ENCODE measurements at regions of chr6 and their contacts with region 1.

Region 1: GRCh38 chr6:41027799-41028628 is 11.0 kb downstream of the UNC5CL start:
- DNase-seq: peak; percentile 86 to 93 (median 93)
- H3K4me3 ChIP-seq: peak overlapping the region; percentile 63 to 88 (median 76)
- H3K27ac ChIP-seq: peak overlapping the region; percentile 51 to 79
- H3K4me1 ChIP-seq: peaks cover 0 to 37% (median 27%) of the 10 kb centered on the region in 4 experiments
- H3K27me3 ChIP-seq: no peaks in the 10 kb centered on the region

Region 2: DNA sequence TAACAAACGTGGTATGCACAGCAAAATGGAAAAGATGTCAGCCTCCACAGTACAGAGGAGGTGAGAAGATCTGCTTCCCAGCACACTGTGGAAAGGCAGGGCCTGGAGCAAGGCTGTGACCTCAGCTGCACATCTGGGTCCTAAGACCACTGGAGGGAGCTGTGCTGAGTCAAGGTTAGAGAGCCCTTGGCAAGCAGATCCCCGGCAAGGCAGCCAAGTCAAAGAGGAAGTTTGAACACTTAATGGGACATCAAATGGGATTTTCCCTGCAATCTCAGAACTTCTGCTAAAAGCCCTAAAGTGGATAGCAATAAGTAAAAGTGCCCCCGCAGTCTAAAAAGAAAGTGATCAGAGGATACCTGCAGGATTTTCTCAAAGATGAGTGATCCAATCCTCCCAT is 28.4 kb before region 1 on chr6:
- CTCF ChIA-PET with region 1: interaction called, 73 read pairs
- POLR2A ChIA-PET with region 1: no interaction called
- DNase-seq: peak; percentile 75 to 87 (median 86)
- H3K4me3 ChIP-seq: no peak overlapping the region
- H3K27ac ChIP-seq: no peak overlapping the region
- H3K4me1 ChIP-seq: no peaks in the 10 kb centered on the region
- H3K27me3 ChIP-seq: peaks cover 0 to 10% (median 0%) of the 10 kb centered on the region in 5 experiments

Region 3: DNA sequence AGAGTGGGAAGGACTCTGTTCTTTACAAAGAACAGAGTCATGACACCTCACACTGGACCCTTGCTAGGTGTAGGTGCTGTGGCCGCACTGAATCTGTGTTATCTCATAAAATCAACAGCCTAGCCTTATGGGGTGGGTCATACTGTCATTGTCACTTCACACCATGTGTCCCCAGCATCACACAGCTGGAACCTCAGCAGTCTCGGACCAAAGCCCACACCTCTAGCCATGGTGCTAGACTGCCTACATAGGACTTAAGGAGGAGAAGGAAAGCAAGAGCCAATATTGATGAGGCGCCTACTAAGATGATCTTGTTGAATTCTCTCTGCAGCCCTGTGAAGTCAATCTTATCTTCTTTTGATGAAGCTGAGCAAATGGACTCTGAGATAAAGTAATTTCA is 20.0 kb before region 1 on chr6:
- CTCF ChIA-PET with region 1: interaction called, 73 read pairs
- POLR2A ChIA-PET with region 1: no interaction called
- DNase-seq: no peak
- H3K4me3 ChIP-seq: no peak overlapping the region
- H3K27ac ChIP-seq: no peak overlapping the region
- H3K4me1 ChIP-seq: no peaks in the 10 kb centered on the region
- H3K27me3 ChIP-seq: peaks cover 0 to 4% (median 0%) of the 10 kb centered on the region in 5 experiments

Region 4: GRCh38 chr6:41053041-41053440 is 25.0 kb after region 1 on chr6 and contains the start of gene APOBEC2:
- CTCF ChIA-PET with region 1: interaction called, 20 read pairs
- POLR2A ChIA-PET with region 1: no interaction called
- DNase-seq: no peak
- H3K4me3 ChIP-seq: no peak within 1 kb of the TSS
- H3K27ac ChIP-seq: no peak within 1 kb of the TSS
- H3K4me1 ChIP-seq: peaks cover 2 to 29% (median 8%) of the 10 kb centered on the region in 4 experiments
- H3K27me3 ChIP-seq: no peaks in the 10 kb centered on the region

Region 5: DNA sequence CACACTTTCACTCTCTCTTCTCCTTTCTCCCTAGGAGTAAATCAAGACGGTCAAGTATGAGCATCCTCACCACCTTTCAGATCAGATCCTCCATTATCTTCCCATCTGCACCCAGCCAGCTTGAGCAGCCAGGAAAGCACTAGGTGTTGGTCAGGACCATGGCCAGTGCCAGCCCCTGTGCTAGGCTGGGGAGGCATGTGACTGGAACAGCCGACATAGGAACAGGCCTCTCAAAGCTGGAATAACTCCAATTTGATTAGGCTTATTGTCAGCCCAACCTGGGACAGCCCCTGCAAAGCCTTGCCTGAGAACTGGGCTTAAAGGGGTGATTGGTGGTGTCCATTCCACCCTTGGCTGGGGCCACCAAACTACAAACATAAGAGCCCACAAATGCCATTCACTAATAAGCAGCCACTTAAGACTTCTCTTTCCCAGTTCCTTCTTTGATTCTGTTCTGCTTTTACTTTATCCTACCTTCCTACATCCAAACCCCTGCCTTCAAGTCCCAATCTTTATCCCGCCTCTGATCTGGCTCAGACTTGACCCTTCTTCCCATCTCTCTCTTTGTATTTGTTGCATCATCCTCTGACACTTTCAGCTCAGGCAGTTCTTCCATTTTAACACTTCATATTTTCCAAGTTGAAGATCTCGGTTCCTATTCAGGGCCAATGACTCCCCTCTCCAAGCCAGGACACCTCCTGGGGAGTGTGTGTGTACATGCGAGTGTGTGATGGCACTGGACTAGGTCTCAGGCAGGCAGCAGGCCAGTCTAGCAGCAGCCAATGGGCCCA is 139.4 kb after region 1 on chr6:
- CTCF ChIA-PET with region 1: no interaction called
- POLR2A ChIA-PET with region 1: no interaction called
- DNase-seq: peak in 2 of 3 donors; percentile 16 to 29
- H3K4me3 ChIP-seq: no peak overlapping the region
- H3K27ac ChIP-seq: no peak overlapping the region
- H3K4me1 ChIP-seq: peaks cover 0 to 3% (median 1%) of the 10 kb centered on the region in 4 experiments
- H3K27me3 ChIP-seq: peaks cover 0 to 2% (median 0%) of the 10 kb centered on the region in 5 experiments

Region 6: GRCh38 chr6:41209547-41210320 is 181.7 kb after region 1 on chr6:
- CTCF ChIA-PET with region 1: no interaction called
- POLR2A ChIA-PET with region 1: no interaction called
- DNase-seq: no peak
- H3K4me3 ChIP-seq: no peak overlapping the region
- H3K27ac ChIP-seq: no peak overlapping the region
- H3K4me1 ChIP-seq: peaks cover 0 to 10% (median 4%) of the 10 kb centered on the region in 4 experiments
- H3K27me3 ChIP-seq: no peaks in the 10 kb centered on the region